ENCODE measurements at regions of chr1 and their contacts with region 1.

Region 1: GRCh38 chr1:66446261-66447001 is 87.5 kb upstream of the SGIP1 start:
- DNase-seq: peak; percentile 86
- ATAC-seq: peak; percentile 52
- H3K4me3 ChIP-seq: peak overlapping the region in 1 of 5 experiments; percentile 43
- H3K4me3 Mint-ChIP-seq: peak overlapping the region; percentile 62
- H3K27ac ChIP-seq: peak overlapping the region; percentile 73 to 78
- H3K27ac Mint-ChIP-seq: peak overlapping the region; percentile 56
- H3K4me1 ChIP-seq: peaks cover 16 to 18% of the 10 kb centered on the region in 2 donors
- H3K4me1 Mint-ChIP-seq: peaks cover 29% of the 10 kb centered on the region
- H3K27me3 ChIP-seq: no peaks in the 10 kb centered on the region
- H3K27me3 Mint-ChIP-seq: no peaks in the 10 kb centered on the region
- CTCF ChIP-seq: peak; percentile 89

Region 2: GRCh38 chr1:65431111-65431705 is 1015.2 kb before region 1 on chr1:
- CTCF ChIA-PET with region 1: interaction called, 3 read pairs
- POLR2A ChIA-PET with region 1: no interaction called
- intact Hi-C with region 1: loop called (anchors 5 kb)
- DNase-seq: peak; percentile 31
- ATAC-seq: no peak
- H3K4me3 ChIP-seq: no peak overlapping the region
- H3K4me3 Mint-ChIP-seq: no peak overlapping the region
- H3K27ac ChIP-seq: no peak overlapping the region
- H3K27ac Mint-ChIP-seq: no peak overlapping the region
- H3K4me1 ChIP-seq: no peaks in the 10 kb centered on the region
- H3K4me1 Mint-ChIP-seq: no peaks in the 10 kb centered on the region
- H3K27me3 ChIP-seq: no peaks in the 10 kb centered on the region
- H3K27me3 Mint-ChIP-seq: no peaks in the 10 kb centered on the region
- CTCF ChIP-seq: peak; percentile 79

Region 3: DNA sequence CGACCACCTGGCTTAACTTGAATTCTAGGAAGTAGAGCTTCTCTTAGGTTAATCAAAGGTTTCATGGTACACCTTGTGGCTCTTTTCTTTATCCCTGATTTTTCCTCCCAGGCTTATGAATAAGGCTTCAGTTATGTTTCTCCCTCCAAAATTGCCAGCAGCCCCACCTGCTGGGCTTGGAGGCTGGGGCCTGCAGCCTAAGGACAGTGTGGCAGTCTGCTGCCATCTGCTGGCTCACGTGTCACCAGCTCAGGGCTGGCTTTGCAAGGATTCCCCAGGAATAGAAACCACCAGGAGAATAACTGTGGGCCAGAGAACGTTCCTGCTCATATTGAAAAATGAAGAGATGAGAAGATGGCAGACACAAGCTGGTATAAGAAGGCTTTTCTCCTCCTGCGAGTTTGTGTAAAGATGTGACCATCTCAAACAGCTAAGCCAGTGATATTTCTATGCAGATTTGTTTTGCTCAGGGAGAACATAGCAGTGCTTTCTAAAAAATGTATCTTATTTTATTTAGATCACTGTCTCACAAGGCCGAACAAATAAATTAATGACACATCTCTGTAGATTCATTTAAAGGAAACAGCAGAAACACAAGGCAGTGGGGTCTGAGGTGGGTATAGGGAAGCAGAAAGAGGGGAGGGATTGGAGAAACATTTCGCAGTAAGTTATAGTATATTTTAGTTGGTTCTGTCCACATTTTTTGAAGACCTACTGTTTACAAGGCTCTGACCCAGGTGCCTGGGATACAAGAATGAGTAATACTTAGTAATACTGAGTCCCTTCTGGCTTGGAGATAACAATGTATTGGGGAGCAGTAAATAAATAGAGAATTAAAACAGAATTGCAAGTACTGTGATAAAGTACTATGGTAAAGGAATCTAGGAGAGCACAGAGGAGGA is 203.5 kb before region 1 on chr1:
- CTCF ChIA-PET with region 1: interaction called, 572 read pairs
- POLR2A ChIA-PET with region 1: no interaction called
- intact Hi-C with region 1: no loop called
- DNase-seq: peak; percentile 75
- ATAC-seq: peak; percentile 94
- H3K4me3 ChIP-seq: no peak overlapping the region
- H3K4me3 Mint-ChIP-seq: no peak overlapping the region
- H3K27ac ChIP-seq: no peak overlapping the region
- H3K27ac Mint-ChIP-seq: no peak overlapping the region
- H3K4me1 ChIP-seq: no peaks in the 10 kb centered on the region
- H3K4me1 Mint-ChIP-seq: peaks cover 7% of the 10 kb centered on the region
- H3K27me3 ChIP-seq: peaks cover 0 to 3% (median 0%) of the 10 kb centered on the region in 4 experiments
- H3K27me3 Mint-ChIP-seq: peaks cover 17% of the 10 kb centered on the region
- CTCF ChIP-seq: peak; percentile 97

Region 4: GRCh38 chr1:66271216-66271903 is 175.1 kb before region 1 on chr1:
- CTCF ChIA-PET with region 1: interaction called, 53 read pairs
- POLR2A ChIA-PET with region 1: no interaction called
- intact Hi-C with region 1: no loop called
- DNase-seq: peak; percentile 48
- ATAC-seq: peak; percentile 90
- H3K4me3 ChIP-seq: no peak overlapping the region
- H3K4me3 Mint-ChIP-seq: peak overlapping the region; percentile 81
- H3K27ac ChIP-seq: no peak overlapping the region
- H3K27ac Mint-ChIP-seq: peak overlapping the region; percentile 93
- H3K4me1 ChIP-seq: peaks cover 14 to 21% of the 10 kb centered on the region in 2 donors
- H3K4me1 Mint-ChIP-seq: peaks cover 36% of the 10 kb centered on the region
- H3K27me3 ChIP-seq: no peaks in the 10 kb centered on the region
- H3K27me3 Mint-ChIP-seq: no peaks in the 10 kb centered on the region
- CTCF ChIP-seq: no peak

Region 5: DNA sequence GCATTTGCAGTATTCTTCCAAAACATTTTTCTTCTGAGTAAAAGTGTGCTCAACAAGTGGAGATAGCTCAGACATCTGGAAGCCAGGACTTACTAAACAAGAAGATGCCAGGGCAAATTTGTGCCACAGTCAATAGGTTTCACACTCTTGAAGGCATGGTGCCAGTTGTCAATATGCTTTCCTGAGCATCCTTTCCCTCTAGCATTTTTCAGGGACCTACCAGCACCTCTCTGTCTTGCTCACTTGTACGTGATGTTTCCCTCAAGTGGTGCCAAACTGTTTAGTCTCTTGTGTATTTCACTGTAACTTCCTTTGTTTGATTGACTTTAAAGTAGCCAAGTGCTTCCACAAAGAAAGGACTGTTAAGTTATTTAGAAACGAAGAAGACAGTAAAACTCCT is 106.5 kb before region 1 on chr1:
- CTCF ChIA-PET with region 1: interaction called, 94 read pairs
- POLR2A ChIA-PET with region 1: no interaction called
- intact Hi-C with region 1: loop called (anchors 1 kb)
- DNase-seq: peak; percentile 50
- ATAC-seq: no peak
- H3K4me3 ChIP-seq: peak overlapping the region in 3 of 5 experiments; percentile 22 to 27 (median 27)
- H3K4me3 Mint-ChIP-seq: peak overlapping the region; percentile 82
- H3K27ac ChIP-seq: peak overlapping the region; percentile 53 to 94
- H3K27ac Mint-ChIP-seq: peak overlapping the region; percentile 67
- H3K4me1 ChIP-seq: peaks cover 77 to 78% of the 10 kb centered on the region in 2 donors
- H3K4me1 Mint-ChIP-seq: peaks cover 77% of the 10 kb centered on the region
- H3K27me3 ChIP-seq: no peaks in the 10 kb centered on the region
- H3K27me3 Mint-ChIP-seq: no peaks in the 10 kb centered on the region
- CTCF ChIP-seq: no peak

Region 6: DNA sequence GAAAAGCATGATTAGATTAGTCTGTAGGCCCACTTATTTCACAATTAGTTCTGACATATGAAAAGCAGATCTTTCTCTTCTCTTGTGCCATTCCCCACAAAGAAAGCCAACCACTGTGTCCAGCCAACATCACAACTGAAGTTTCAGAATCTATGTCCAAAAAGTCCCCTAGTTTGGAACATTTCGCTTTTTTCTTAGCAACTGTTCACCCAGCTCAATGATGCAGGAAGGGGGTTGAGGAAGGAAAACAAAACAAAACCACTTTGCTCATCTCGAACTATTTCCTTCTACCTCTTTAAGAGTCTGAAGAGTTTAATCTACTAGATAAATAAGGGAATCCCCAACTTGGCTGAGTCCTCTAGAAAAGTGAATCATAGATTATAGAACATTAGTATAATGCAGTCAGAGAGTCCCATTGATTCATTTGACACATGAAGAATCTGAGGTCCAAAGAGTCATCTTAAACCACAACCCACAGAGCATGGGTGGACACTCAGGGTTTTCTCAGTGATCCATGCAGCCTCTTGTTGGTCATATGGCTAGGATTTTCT is 71.8 kb before region 1 on chr1:
- CTCF ChIA-PET with region 1: interaction called, 181 read pairs
- POLR2A ChIA-PET with region 1: interaction called, 10 read pairs
- intact Hi-C with region 1: loop called (anchors 1 kb)
- DNase-seq: peak; percentile 90
- ATAC-seq: peak; percentile 73
- H3K4me3 ChIP-seq: peak overlapping the region in 1 of 5 experiments; percentile 13
- H3K4me3 Mint-ChIP-seq: peak overlapping the region; percentile 69
- H3K27ac ChIP-seq: peak overlapping the region; percentile 83 to 90
- H3K27ac Mint-ChIP-seq: peak overlapping the region; percentile 81
- H3K4me1 ChIP-seq: peaks cover 82 to 89% of the 10 kb centered on the region in 2 donors
- H3K4me1 Mint-ChIP-seq: peaks cover 86% of the 10 kb centered on the region
- H3K27me3 ChIP-seq: no peaks in the 10 kb centered on the region
- H3K27me3 Mint-ChIP-seq: no peaks in the 10 kb centered on the region
- CTCF ChIP-seq: no peak

Region 7: GRCh38 chr1:66402194-66402593 is 44.2 kb before region 1 on chr1:
- CTCF ChIA-PET with region 1: interaction called, 56 read pairs
- POLR2A ChIA-PET with region 1: interaction called, 4 read pairs
- intact Hi-C with region 1: no loop called
- DNase-seq: peak; percentile 92
- ATAC-seq: peak; percentile 87
- H3K4me3 ChIP-seq: no peak overlapping the region
- H3K4me3 Mint-ChIP-seq: peak overlapping the region; percentile 77
- H3K27ac ChIP-seq: peak overlapping the region; percentile 37 to 76
- H3K27ac Mint-ChIP-seq: peak overlapping the region; percentile 88
- H3K4me1 ChIP-seq: peaks cover 42 to 45% of the 10 kb centered on the region in 2 donors
- H3K4me1 Mint-ChIP-seq: peaks cover 67% of the 10 kb centered on the region
- H3K27me3 ChIP-seq: no peaks in the 10 kb centered on the region
- H3K27me3 Mint-ChIP-seq: no peaks in the 10 kb centered on the region
- CTCF ChIP-seq: no peak

Region 8: DNA sequence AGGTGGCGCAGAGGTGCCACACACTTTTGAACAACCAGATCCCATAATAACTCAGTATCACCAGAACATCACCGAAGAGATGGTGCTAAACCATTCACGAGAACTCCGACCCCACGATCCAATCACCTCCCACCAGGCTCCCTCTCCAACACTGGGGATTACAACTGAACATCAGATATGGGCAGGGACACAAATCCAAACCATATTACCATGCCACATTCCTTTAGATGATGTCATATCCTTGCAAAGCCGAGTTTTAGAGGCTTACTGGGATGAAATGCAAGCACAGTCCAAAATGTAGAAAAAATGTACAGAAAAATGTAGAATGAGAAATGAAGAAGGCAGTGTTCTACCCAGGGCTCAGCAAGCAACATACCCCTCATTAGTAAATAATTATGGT is 152.2 kb after region 1 on chr1:
- CTCF ChIA-PET with region 1: no interaction called
- POLR2A ChIA-PET with region 1: no interaction called
- intact Hi-C with region 1: no loop called
- DNase-seq: no peak
- ATAC-seq: no peak
- H3K4me3 ChIP-seq: no peak overlapping the region
- H3K4me3 Mint-ChIP-seq: no peak overlapping the region
- H3K27ac ChIP-seq: no peak overlapping the region
- H3K27ac Mint-ChIP-seq: no peak overlapping the region
- H3K4me1 ChIP-seq: no peaks in the 10 kb centered on the region
- H3K4me1 Mint-ChIP-seq: no peaks in the 10 kb centered on the region
- H3K27me3 ChIP-seq: peaks cover 0 to 3% (median 0%) of the 10 kb centered on the region in 4 experiments
- H3K27me3 Mint-ChIP-seq: peaks cover 27% of the 10 kb centered on the region
- CTCF ChIP-seq: no peak